PC-9 (cell line): ENCODE measurements at regions of chr3 and their contacts with region 1.

Region 1: GRCh38 chr3:117630469-117630868 is 920.9 kb downstream of the TUSC7 start:
- DNase-seq: no peak
- H3K4me3 ChIP-seq: no peak overlapping the region
- H3K27ac ChIP-seq: no peak overlapping the region
- H3K4me1 ChIP-seq: no peaks in the 10 kb centered on the region
- H3K27me3 ChIP-seq: no peaks in the 10 kb centered on the region
- CTCF ChIP-seq: no peak

Region 2: DNA sequence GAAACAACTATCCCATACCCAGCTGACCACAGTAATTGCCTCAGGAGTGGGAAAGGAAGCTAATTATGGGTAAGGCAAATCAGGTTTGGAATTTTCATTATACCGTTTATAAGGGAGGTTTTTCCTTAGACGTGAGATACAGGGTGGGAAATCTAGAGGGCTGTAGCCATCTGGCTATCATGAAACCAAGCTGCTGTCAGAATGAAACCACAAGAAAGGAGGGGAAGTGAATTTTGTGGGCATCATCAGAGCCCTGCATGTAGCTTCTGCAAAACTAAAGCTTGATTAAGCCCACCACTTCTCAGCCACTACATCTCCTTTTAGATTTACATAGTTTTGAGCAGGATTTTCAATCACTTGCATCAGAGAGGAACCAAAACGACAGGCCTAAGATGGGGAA is 27.4 kb before region 1 on chr3:
- CTCF ChIA-PET with region 1: no interaction called
- POLR2A ChIA-PET with region 1: no interaction called
- intact Hi-C with region 1: no loop called
- DNase-seq: no peak
- H3K4me3 ChIP-seq: no peak overlapping the region
- H3K27ac ChIP-seq: no peak overlapping the region
- H3K4me1 ChIP-seq: no peaks in the 10 kb centered on the region
- H3K27me3 ChIP-seq: no peaks in the 10 kb centered on the region
- CTCF ChIP-seq: no peak

Region 3: DNA sequence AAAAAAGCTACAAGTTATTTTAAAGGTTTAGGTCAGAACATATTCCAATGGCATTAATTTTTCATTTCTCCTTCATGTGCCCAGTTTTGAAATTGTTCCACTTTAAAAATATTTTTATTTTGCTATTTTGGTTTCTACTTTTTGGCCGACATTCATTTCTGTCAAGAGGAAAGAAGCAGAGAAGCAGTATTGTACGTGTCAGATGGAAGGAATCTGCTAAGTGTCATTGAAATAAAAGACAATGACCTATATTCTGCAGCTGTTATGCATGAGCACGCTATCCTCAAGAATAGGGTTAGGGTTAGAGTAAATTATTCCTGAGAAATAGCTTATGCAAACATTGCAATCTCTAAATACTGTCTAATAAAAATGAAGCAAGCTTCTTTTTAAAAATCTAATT is 20.8 kb after region 1 on chr3:
- CTCF ChIA-PET with region 1: no interaction called
- POLR2A ChIA-PET with region 1: no interaction called
- intact Hi-C with region 1: no loop called
- DNase-seq: no peak
- H3K4me3 ChIP-seq: no peak overlapping the region
- H3K27ac ChIP-seq: no peak overlapping the region
- H3K4me1 ChIP-seq: no peaks in the 10 kb centered on the region
- H3K27me3 ChIP-seq: no peaks in the 10 kb centered on the region
- CTCF ChIP-seq: no peak

Region 4: GRCh38 chr3:117774130-117774529 is 143.7 kb after region 1 on chr3:
- CTCF ChIA-PET with region 1: no interaction called
- POLR2A ChIA-PET with region 1: no interaction called
- intact Hi-C with region 1: no loop called
- DNase-seq: no peak
- H3K4me3 ChIP-seq: no peak overlapping the region
- H3K27ac ChIP-seq: no peak overlapping the region
- H3K4me1 ChIP-seq: no peaks in the 10 kb centered on the region
- H3K27me3 ChIP-seq: no peaks in the 10 kb centered on the region
- CTCF ChIP-seq: no peak

Region 5: GRCh38 chr3:119069725-119070124 is 1439.3 kb after region 1 on chr3:
- CTCF ChIA-PET with region 1: no interaction called
- POLR2A ChIA-PET with region 1: interaction called, 24 read pairs
- intact Hi-C with region 1: no loop called
- DNase-seq: no peak
- H3K4me3 ChIP-seq: no peak overlapping the region
- H3K27ac ChIP-seq: no peak overlapping the region
- H3K4me1 ChIP-seq: no peaks in the 10 kb centered on the region
- H3K27me3 ChIP-seq: no peaks in the 10 kb centered on the region
- CTCF ChIP-seq: no peak